ENCODE measurements at regions of chr5 and their contacts with region 1.

Region 1: GRCh38 chr5:141512390-141512910 is 23.6 kb downstream of the PCDHGC5 start:
- DNase-seq: peak; percentile 74
- H3K4me3 Mint-ChIP-seq: peak overlapping the region; percentile 87
- H3K27ac Mint-ChIP-seq: peak overlapping the region; percentile 95
- H3K4me1 Mint-ChIP-seq: peaks cover 37% of the 10 kb centered on the region
- H3K27me3 Mint-ChIP-seq: no peaks in the 10 kb centered on the region

Region 2: GRCh38 chr5:141272906-141273305 is 239.5 kb before region 1 on chr5:
- intact Hi-C with region 1: no loop called
- DNase-seq: no peak
- H3K4me3 Mint-ChIP-seq: no peak overlapping the region
- H3K27ac Mint-ChIP-seq: no peak overlapping the region
- H3K4me1 Mint-ChIP-seq: no peaks in the 10 kb centered on the region
- H3K27me3 Mint-ChIP-seq: no peaks in the 10 kb centered on the region

Region 3: DNA sequence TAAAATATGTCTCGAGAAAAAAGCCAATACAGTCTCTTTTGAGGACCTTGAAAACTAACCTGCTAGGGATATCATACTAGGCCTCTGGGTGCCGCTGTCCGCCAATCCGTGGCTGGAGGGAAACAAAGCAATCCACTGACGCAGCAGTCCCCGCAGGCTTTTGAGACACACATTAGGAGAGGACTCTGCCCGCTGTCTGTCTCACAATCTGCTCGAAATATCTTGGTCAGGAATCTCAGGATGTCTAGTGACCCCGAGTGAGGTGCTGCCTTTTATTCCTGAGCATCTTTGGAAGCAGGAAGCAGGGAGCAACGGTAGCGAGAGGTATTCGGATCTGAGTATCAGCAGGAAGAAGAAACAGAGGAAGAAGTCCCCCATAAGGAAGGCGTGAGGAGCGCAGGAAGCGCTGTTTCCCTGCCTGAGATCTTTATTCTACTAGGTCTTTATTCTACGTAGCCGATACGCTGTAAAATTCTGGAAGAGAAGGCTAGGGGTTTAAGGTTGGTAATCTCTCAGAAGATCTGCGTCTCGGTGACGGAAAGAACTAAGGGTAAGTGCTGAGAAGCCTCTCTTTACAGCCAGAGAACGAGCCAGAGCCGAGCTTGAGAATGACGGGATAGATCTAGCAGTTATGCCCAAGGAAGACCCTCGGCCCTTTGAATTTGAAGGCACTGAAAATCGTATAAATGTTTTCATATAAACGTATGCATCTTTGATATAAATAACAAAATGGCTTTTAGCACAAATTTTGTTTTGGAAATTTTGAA is 186.2 kb before region 1 on chr5:
- intact Hi-C with region 1: loop called (anchors 1 kb)
- DNase-seq: peak; percentile 59
- H3K4me3 Mint-ChIP-seq: peak overlapping the region; percentile 98
- H3K27ac Mint-ChIP-seq: peak overlapping the region; percentile 83
- H3K4me1 Mint-ChIP-seq: peaks cover 16% of the 10 kb centered on the region
- H3K27me3 Mint-ChIP-seq: peaks cover 12% of the 10 kb centered on the region

Region 4: GRCh38 chr5:141430332-141431113 is 81.9 kb before region 1 on chr5 and contains the start of gene PCDHGA12:
- intact Hi-C with region 1: loop called (anchors 1 kb)
- DNase-seq: no peak
- H3K4me3 Mint-ChIP-seq: peak within 1 kb of the TSS; percentile 73
- H3K27ac Mint-ChIP-seq: peak within 1 kb of the TSS; percentile 67
- H3K4me1 Mint-ChIP-seq: no peaks in the 10 kb centered on the region
- H3K27me3 Mint-ChIP-seq: peaks cover 17% of the 10 kb centered on the region
- total RNA-seq, gene PCDHGA12: 0.18 TPM in 1 of 2 replicates, not detected in the other

Region 5: DNA sequence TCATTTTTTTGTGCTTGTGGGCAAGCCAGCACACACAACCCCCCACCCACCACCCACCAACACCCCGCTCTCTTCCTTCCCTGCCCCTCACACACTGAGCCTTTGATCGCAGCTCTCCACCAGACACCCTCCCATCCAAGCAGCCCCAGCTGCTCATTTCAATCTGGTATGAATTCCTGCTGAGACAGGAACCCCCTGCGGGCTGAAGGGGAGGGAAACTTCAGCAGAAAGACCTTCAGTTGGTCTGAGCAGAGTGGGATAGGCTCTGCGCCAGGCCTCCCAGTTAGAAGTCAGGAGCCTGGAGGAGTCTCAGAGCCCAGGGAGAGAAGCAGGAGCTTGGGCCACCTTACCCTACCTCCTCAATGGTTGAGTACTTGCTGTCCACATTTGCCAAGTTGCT is 16.4 kb before region 1 on chr5:
- intact Hi-C with region 1: no loop called
- DNase-seq: no peak
- H3K4me3 Mint-ChIP-seq: no peak overlapping the region
- H3K27ac Mint-ChIP-seq: no peak overlapping the region
- H3K4me1 Mint-ChIP-seq: no peaks in the 10 kb centered on the region
- H3K27me3 Mint-ChIP-seq: peaks cover 31% of the 10 kb centered on the region

Region 6: DNA sequence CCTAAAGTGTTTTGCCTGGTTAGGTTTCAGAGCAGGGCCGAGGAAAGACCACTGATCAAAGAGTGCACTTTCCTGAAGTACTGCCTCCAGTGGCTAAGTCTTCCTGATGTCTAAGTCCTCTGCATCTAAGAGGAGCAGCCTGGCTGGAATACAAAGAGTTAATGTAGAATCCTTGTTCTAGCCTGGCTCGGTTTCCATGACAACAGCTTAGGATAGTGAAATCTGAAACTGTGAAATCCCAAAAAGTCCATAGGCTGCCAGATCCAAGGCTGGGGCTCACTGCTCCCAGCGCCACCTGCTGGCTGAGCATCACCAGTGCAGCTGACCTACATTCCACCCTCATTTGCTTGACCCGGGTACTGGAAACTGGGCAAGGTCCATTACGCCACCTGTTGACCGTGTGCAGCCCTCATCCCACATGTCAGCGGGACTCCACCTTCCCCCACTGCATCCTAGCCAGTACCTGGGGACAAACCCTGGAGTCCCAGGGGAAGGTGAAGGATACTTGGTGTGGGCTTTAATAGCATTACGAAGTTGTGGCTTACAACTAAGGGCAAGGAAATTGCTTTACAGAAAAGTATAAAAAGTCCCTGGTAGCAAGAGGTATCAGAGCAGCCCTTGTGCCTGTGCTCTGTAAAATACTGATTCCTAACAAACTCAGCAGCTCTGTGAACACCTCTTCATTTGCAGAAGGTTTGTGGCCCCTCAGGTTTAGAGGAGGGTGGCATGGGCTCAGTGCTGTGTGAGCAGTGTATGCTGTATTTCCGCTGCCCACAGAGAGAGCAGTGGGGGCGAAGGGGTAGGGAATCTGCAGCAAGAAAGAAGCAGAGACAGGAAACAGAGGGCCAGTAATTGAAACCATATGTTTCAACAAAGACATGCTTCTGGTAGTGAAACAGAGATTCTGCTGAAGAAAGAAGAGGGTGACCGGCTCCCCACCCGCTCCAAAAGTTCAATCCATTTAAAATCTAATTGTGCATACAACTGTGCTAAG is 12.5 kb after region 1 on chr5:
- intact Hi-C with region 1: loop called (anchors 1 kb)
- DNase-seq: no peak
- H3K4me3 Mint-ChIP-seq: no peak overlapping the region
- H3K27ac Mint-ChIP-seq: peak overlapping the region; percentile 29
- H3K4me1 Mint-ChIP-seq: peaks cover 38% of the 10 kb centered on the region
- H3K27me3 Mint-ChIP-seq: no peaks in the 10 kb centered on the region